ENCODE measurements at regions of chr17 and their contacts with region 1.

Region 1: DNA sequence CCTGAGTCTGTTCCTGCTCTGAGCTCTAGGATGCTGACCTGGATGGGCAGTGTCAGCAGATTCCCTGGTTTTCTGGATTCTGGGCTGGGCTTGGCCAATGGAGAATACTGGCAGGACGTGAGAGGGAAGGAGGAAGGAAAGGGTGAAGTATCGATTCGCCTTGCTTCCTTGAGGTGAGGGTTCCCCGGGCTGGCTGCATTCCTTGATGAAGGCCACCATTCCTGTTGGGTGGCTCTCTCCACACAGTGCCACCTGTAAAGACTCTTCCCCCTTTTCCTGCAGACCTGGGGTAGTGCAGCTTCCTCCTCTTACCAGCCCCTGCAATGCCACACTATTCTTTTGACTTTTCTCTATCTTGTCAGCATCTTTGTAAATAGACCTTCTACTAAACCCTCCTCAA is 58.1 kb upstream of the TANC2 start:
- DNase-seq: no peak
- H3K4me3 ChIP-seq: no peak overlapping the region
- H3K27ac ChIP-seq: no peak overlapping the region
- H3K4me1 ChIP-seq: peaks cover 5% of the 10 kb centered on the region
- H3K27me3 ChIP-seq: no peaks in the 10 kb centered on the region
- CTCF ChIP-seq: no peak
- POLR2A ChIP-seq: no peak

Region 2: DNA sequence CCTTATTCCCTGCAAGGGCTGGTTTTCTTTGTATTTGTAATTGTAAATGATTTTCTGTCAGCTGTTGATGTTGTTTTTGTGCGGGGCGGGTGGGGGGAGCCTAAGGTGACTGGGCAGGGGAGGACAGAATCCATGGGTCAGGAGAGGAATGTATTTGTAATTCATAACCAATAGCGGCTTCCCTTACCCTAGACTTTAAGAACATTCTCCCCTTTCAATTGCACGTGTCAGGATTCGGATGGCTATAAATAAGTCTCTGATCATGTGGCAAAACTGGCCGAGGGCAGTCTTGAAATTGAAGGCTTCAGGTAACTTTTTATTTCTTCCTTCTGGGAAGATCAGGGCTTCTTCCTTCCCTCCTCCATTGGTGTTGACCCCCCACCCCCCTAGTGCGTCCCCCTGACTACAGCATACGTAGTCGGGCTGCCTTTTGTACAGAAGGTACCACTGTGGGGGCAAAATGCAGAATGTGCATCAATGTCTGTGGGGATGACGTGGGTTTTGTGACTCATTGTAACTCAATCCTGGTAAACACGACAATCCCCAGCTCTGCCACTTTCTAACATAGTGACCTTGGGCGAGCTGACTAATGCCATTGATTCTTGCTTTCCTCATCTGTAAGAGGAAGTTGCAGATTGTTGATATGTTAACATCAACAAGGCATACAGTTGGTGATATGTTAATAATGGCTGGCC is 116.1 kb before region 1 on chr17:
- intact Hi-C with region 1: no loop called
- DNase-seq: no peak
- H3K4me3 ChIP-seq: no peak overlapping the region
- H3K27ac ChIP-seq: no peak overlapping the region
- H3K4me1 ChIP-seq: no peaks in the 10 kb centered on the region
- H3K27me3 ChIP-seq: no peaks in the 10 kb centered on the region
- CTCF ChIP-seq: no peak
- POLR2A ChIP-seq: no peak

Region 3: GRCh38 chr17:62833395-62833794 is 74.6 kb before region 1 on chr17:
- intact Hi-C with region 1: loop called (anchors 2 kb)
- DNase-seq: no peak
- H3K4me3 ChIP-seq: no peak overlapping the region
- H3K27ac ChIP-seq: no peak overlapping the region
- H3K4me1 ChIP-seq: no peaks in the 10 kb centered on the region
- H3K27me3 ChIP-seq: no peaks in the 10 kb centered on the region
- CTCF ChIP-seq: no peak
- POLR2A ChIP-seq: no peak